PC-9 (cell line): ENCODE measurements at regions of chr3 and their contacts with region 1.

Region 1: DNA sequence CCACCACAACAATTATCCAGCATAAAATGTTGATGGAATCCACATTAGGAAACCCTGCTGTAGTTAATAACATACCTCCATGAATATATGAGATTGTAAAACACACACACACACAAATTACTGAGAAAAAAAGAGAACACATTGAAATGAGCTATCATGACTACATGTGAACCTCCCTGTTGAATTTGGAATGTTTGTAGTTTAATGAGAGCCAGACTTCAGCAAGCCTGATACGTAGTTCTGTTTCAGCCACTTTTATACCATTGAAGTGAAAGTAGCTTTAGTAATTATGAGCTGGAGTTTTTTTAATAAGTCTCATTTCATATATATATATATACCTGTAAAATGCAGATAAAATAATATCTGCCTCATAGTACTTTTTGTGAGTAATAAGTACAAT is 1146.4 kb downstream of the NAALADL2 start:
- DNase-seq: no peak
- H3K4me3 ChIP-seq: no peak overlapping the region
- H3K27ac ChIP-seq: no peak overlapping the region
- H3K4me1 ChIP-seq: no peaks in the 10 kb centered on the region
- H3K27me3 ChIP-seq: no peaks in the 10 kb centered on the region
- CTCF ChIP-seq: no peak

Region 2: GRCh38 chr3:175287361-175287963 is 718.1 kb before region 1 on chr3:
- CTCF ChIA-PET with region 1: no interaction called
- POLR2A ChIA-PET with region 1: interaction called, 11 read pairs
- intact Hi-C with region 1: no loop called
- DNase-seq: no peak
- H3K4me3 ChIP-seq: no peak overlapping the region
- H3K27ac ChIP-seq: no peak overlapping the region
- H3K4me1 ChIP-seq: no peaks in the 10 kb centered on the region
- H3K27me3 ChIP-seq: no peaks in the 10 kb centered on the region
- CTCF ChIP-seq: no peak

Region 3: DNA sequence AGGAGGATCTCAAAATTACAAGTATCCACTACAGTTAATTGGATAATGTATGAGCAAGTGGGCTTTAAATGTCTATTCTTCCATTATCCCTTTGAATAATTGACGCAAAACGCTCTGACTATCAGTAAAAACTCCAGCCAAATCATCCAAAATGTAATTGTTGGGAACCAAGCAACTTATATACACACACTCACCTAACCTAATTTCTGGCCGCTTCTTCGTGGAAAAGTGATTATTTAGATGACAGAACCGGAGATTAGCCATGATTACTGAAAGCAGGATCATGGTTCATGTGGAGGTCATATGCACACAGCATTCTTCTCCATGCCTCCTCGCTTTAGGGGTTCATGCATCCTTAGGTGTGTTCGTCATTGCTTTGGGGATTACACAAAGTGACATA is 154.0 kb before region 1 on chr3:
- CTCF ChIA-PET with region 1: no interaction called
- POLR2A ChIA-PET with region 1: no interaction called
- intact Hi-C with region 1: no loop called
- DNase-seq: no peak
- H3K4me3 ChIP-seq: no peak overlapping the region
- H3K27ac ChIP-seq: no peak overlapping the region
- H3K4me1 ChIP-seq: no peaks in the 10 kb centered on the region
- H3K27me3 ChIP-seq: no peaks in the 10 kb centered on the region
- CTCF ChIP-seq: no peak